Heart right ventricle (tissue), 16 donors: ENCODE measurements at regions of chr15 and their contacts with region 1.

Region 1: DNA sequence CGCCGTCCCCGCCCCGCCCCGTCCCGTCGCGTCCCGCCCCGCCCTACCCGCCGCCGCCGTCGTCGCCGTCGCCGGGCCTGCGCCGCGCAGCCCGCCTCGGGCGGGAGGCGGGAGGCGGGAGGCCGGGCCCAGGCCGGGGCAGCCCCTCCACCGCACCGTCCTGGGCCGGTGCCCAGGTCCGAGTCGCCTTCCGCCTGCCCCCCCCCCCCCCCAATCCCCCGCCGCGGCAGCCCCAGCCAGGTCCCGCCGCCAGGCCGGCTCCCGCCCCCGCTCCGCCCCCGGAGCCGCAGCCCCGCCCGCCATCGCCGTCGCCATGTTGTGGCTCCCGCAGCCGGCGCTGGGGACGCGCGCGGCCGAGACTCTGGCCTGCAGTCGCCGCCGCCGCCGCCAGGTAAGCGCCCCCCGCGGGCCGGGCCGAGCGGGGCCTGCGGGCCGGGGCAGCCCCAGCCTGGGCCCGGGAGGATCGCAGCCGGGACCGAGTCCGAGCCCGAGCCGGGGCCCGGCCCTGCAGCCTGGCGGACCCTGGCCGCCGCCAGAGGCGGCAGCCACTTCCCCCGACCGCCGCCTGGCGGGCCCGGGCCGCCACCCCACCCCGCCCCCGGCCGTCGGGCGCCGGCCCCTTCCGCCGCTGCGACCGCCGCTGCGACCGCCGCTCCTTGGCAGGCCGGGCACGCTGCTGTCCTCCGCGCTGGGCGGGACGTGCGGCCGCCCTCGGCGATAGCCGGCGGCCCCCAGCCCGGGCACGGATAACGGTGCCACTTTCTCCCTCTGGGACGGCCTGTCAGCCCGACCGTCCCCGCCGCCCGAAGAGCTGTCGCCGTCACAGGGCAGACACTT is at the start of gene ZNF592:
- DNase-seq: peak; percentile 86 to 92
- ATAC-seq: peak; percentile 53 to 86 (median 77)
- H3K4me3 ChIP-seq: peak within 1 kb of the TSS; percentile 61 to 98 (median 86)
- H3K27ac ChIP-seq: peak within 1 kb of the TSS; percentile 98 to 100 (median 100)
- H3K4me1 ChIP-seq: peaks cover 10 to 74% (median 63%) of the 10 kb centered on the region in 9 donors
- H3K27me3 ChIP-seq: no peaks in the 10 kb centered on the region
- CTCF ChIP-seq: peak in 5 of 9 donors; percentile 11 to 68 (median 36)
- total RNA-seq, gene ZNF592: 17.1 to 26.9 (median 20.8) TPM

Region 2: DNA sequence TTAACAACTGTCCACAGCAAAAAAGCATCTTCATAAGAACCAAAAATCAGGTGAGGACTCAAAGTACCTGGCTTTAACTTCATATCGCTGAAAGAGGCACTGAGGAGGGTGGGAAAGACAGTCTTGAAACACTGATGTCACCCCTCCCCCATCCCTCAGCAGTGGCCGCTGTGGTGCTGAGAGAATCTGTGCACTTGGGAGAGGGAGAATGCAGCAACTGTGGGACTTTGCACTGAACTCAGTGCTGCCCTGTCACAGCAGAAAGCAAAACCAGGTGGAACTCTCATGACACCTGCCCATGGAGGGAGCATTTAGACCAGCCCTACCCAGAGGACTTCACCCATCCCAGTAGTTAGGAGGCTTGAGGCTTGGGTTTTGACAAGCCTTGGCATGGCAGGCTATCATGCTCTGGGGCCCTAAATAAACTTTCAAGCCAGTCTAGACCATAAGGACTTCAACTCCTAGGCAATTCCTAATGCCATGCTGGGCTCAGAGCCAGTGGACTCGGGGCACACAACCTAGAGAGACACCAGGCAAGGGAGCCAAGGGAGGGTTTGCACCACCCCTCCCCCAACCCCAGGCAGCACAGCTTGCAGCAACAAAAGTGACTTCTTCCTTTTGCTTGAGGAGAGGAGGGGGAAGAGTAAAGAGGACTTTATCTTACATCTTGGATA is 153.7 kb before region 1 on chr15:
- intact Hi-C with region 1: loop called in 2 of 10 experiments (anchors 5 to 10 kb)
- DNase-seq: no peak
- ATAC-seq: no peak
- H3K4me3 ChIP-seq: no peak overlapping the region
- H3K27ac ChIP-seq: no peak overlapping the region
- H3K4me1 ChIP-seq: peaks cover 0 to 37% (median under 1%) of the 10 kb centered on the region in 9 donors
- H3K27me3 ChIP-seq: no peaks in the 10 kb centered on the region
- CTCF ChIP-seq: no peak

Region 3: DNA sequence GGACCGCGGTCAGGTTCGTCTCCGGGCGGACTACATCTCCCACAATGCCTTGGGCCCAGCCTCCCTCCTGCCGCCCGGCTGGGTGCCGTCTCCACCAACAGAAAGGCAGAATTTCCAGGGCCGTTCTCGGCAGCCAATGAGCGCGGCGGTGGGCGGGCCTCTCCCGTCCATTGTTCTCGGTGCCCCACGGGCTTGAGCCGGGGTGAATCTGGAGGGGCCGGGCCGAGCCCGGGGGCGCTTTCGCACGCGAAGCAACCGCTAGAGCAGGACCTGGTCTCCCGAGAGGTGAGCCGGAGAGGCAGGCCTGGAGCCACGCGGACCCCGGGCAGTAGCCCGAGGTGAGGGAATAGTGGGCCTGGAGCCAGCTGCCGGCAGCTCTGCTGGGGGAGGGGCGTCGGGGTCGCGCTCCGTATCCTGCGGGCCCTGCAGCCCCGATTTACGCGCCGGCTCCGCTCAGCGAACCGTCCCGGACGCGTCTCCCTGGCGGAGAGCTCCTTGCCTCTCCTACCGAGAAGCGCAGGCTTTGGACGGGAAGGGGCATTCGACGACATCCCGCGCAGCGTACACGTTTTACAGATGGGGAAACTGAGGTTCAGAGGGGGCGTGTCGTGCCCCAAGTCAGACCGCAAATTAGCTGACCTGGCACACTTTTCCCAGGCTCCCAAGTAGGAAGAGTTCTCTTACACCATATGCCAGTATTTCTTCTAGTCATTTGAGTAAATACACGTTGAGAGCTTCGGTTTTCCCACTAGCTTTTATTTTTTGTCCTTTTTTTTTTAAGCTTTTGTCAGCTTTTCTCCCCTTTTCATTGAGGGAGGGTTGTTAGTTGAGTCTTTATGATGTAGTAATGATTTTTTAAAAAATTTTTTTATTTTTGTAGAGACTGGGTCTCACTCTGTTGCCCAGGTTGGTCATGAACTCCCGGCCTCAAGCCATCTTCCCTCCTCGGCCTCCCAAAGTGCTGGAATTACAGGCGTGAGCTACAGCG is 147.3 kb before region 1 on chr15 and contains the start of gene ZSCAN2:
- intact Hi-C with region 1: loop called in 2 of 10 experiments (anchors 5 to 10 kb)
- DNase-seq: peak; percentile 94 to 96
- ATAC-seq: peak; percentile 98 to 99 (median 99)
- H3K4me3 ChIP-seq: peak within 1 kb of the TSS; percentile 69 to 99 (median 82)
- H3K27ac ChIP-seq: peak within 1 kb of the TSS in 9 of 10 donors; percentile 46 to 80 (median 72)
- H3K4me1 ChIP-seq: peaks cover 0 to 51% (median 15%) of the 10 kb centered on the region in 9 donors
- H3K27me3 ChIP-seq: no peaks in the 10 kb centered on the region
- CTCF ChIP-seq: no peak
- total RNA-seq, gene ZSCAN2: 3.7 to 8.1 (median 5.9) TPM

Region 4: GRCh38 chr15:84702961-84703482 is 45.5 kb before region 1 on chr15:
- intact Hi-C with region 1: loop called in 1 of 10 experiments (anchors 5 kb)
- DNase-seq: peak; percentile 17 to 78
- ATAC-seq: peak; percentile 78 to 94 (median 90)
- H3K4me3 ChIP-seq: no peak overlapping the region
- H3K27ac ChIP-seq: peak overlapping the region in 5 of 10 donors; percentile 13 to 51 (median 26)
- H3K4me1 ChIP-seq: peaks cover 3 to 65% (median 22%) of the 10 kb centered on the region in 9 donors
- H3K27me3 ChIP-seq: no peaks in the 10 kb centered on the region
- CTCF ChIP-seq: no peak

Region 5: DNA sequence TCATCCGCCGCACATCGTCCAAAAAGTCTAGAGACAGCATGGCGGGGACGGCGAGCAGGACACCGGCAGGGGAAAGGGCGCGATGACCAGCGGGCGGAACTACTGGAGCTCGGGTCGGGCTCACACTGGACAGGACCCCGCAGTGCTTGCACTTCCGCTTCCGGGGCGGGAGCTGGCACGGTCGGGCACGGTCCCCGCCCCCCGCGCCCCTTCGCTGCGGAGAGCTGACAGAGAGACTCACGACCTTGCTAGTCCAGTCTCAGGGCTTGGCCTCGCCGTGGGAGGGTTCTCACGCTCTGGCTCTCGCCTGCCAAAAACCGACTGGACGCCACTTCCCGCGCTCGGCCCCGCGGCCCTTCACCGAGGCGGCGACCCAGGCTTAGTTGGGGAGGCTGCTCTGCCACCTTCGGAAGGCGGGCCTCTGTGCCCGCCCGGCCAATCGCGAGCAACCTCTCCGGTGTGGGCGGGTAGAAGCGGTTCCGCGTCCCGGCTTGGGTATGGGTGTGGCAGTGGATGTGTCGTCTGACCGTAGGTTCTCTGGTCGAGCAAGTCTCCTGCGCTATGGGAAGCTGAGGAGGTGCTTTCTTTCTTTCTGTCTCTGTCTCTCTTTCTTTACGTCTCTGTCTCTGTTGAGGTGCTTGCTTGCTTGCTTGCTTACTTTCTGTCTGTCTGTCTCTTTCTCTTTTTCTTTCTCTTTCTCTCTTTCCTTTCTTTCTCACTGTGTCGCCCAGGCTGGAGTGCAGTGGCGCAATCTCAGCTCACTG is 32.3 kb before region 1 on chr15 and contains the start of gene SEC11A:
- intact Hi-C with region 1: loop called in 6 of 10 experiments (anchors 2 to 5 kb)
- DNase-seq: peak; percentile 94 to 95
- ATAC-seq: peak; percentile 98 to 99 (median 98)
- H3K4me3 ChIP-seq: peak within 1 kb of the TSS; percentile 68 to 97 (median 88)
- H3K27ac ChIP-seq: peak within 1 kb of the TSS; percentile 89 to 98 (median 96)
- H3K4me1 ChIP-seq: peaks cover 5 to 53% (median 27%) of the 10 kb centered on the region in 9 donors
- H3K27me3 ChIP-seq: no peaks in the 10 kb centered on the region
- CTCF ChIP-seq: peak in 2 of 9 donors; percentile 6 to 8
- total RNA-seq, gene SEC11A: 65.9 to 93.8 (median 75.0) TPM

Region 6: GRCh38 chr15:84818261-84819131 is 70.0 kb after region 1 on chr15:
- intact Hi-C with region 1: loop called in 8 of 10 experiments (anchors 1 to 10 kb)
- DNase-seq: peak in 1 of 2 donors; percentile 71
- ATAC-seq: peak in 7 of 8 donors; percentile 12 to 63 (median 30)
- H3K4me3 ChIP-seq: peak overlapping the region; percentile 31 to 73 (median 64)
- H3K27ac ChIP-seq: peak overlapping the region; percentile 91 to 99 (median 96)
- H3K4me1 ChIP-seq: peaks cover 14 to 78% (median 70%) of the 10 kb centered on the region in 9 donors
- H3K27me3 ChIP-seq: no peaks in the 10 kb centered on the region
- CTCF ChIP-seq: peak in 4 of 9 donors; percentile 9 to 41 (median 24)

Region 7: GRCh38 chr15:84915011-84915958 is 166.8 kb after region 1 on chr15:
- intact Hi-C with region 1: loop called in 1 of 10 experiments (anchors 10 kb)
- DNase-seq: peak; percentile 75 to 90
- ATAC-seq: peak; percentile 53 to 88 (median 81)
- H3K4me3 ChIP-seq: no peak overlapping the region
- H3K27ac ChIP-seq: peak overlapping the region; percentile 77 to 91 (median 88)
- H3K4me1 ChIP-seq: peaks cover 32 to 68% (median 53%) of the 10 kb centered on the region in 9 donors
- H3K27me3 ChIP-seq: no peaks in the 10 kb centered on the region
- CTCF ChIP-seq: no peak